ENCODE measurements at regions of chr2 and their contacts with region 1.

Region 1: GRCh38 chr2:118003396-118003824 is 10.5 kb downstream of the CCDC93 start:
- DNase-seq: peak; percentile 90
- H3K4me3 Mint-ChIP-seq: no peak overlapping the region
- H3K27ac Mint-ChIP-seq: peak overlapping the region; percentile 73
- H3K4me1 Mint-ChIP-seq: peaks cover 17% of the 10 kb centered on the region
- H3K27me3 Mint-ChIP-seq: no peaks in the 10 kb centered on the region

Region 2: GRCh38 chr2:117814417-117815264 is 188.8 kb before region 1 on chr2 and contains the start of gene DDX18:
- intact Hi-C with region 1: loop called (anchors 1 kb)
- DNase-seq: peak; percentile 99
- H3K4me3 Mint-ChIP-seq: peak within 1 kb of the TSS; percentile 97
- H3K27ac Mint-ChIP-seq: peak within 1 kb of the TSS; percentile 95
- H3K4me1 Mint-ChIP-seq: peaks cover 30% of the 10 kb centered on the region
- H3K27me3 Mint-ChIP-seq: no peaks in the 10 kb centered on the region
- total RNA-seq, gene DDX18: 150 and 157 TPM in 2 replicates

Region 3: DNA sequence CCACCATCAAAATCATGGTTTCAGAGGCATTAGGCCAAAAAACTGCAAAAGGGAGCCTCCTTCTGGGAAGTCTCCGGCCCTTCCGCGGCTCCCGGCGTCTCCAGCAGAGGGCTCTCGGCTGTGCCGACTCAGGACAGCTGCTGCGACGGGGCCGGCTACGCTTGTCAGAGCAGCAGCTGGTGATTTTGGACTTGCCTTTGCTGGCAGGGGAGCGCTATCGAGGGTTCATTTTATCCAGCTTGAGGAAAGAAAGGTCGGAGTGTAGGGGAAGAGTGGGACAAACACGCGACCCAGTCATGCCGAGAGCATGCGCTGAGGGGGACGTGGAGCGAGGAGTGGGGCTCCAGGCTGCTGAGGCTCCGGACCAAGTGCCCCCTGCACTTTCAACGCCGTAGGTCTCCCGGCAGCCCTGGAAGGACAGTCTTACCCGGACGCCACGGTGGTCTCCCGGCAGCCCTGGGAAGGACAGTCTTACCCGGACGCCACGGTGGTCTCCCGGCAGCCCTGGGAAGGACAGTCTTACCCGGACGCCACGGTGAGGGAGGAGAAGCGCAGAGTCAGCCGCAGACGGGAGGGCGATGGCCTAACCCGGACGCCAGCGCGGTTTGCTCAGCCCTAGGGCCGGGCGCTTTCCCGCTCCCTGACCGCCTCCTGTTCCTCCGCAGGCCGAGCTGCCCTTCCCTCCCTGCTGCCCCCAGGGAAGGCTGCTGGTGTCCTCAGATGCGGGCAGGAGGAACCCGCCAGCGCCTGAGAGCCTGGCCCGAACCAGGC is 167.2 kb before region 1 on chr2:
- intact Hi-C with region 1: loop called (anchors 1 kb)
- DNase-seq: peak; percentile 82
- H3K4me3 Mint-ChIP-seq: peak overlapping the region; percentile 58
- H3K27ac Mint-ChIP-seq: peak overlapping the region; percentile 31
- H3K4me1 Mint-ChIP-seq: peaks cover 3% of the 10 kb centered on the region
- H3K27me3 Mint-ChIP-seq: no peaks in the 10 kb centered on the region

Region 4: GRCh38 chr2:118013724-118014491 is 10.5 kb after region 1 on chr2 and contains the start of gene CCDC93:
- intact Hi-C with region 1: loop called (anchors 1 kb)
- DNase-seq: peak; percentile 97
- H3K4me3 Mint-ChIP-seq: peak within 1 kb of the TSS; percentile 96
- H3K27ac Mint-ChIP-seq: peak within 1 kb of the TSS; percentile 91
- H3K4me1 Mint-ChIP-seq: peaks cover 41% of the 10 kb centered on the region
- H3K27me3 Mint-ChIP-seq: no peaks in the 10 kb centered on the region
- total RNA-seq, gene CCDC93: 30.3 and 34.4 TPM in 2 replicates

Region 5: GRCh38 chr2:118032169-118033013 is 29.0 kb after region 1 on chr2:
- intact Hi-C with region 1: no loop called
- DNase-seq: peak; percentile 79
- H3K4me3 Mint-ChIP-seq: no peak overlapping the region
- H3K27ac Mint-ChIP-seq: no peak overlapping the region
- H3K4me1 Mint-ChIP-seq: peaks cover 2% of the 10 kb centered on the region
- H3K27me3 Mint-ChIP-seq: peaks cover 51% of the 10 kb centered on the region

Region 6: GRCh38 chr2:118122594-118123281 is 119.3 kb after region 1 on chr2:
- intact Hi-C with region 1: no loop called
- DNase-seq: no peak
- H3K4me3 Mint-ChIP-seq: no peak overlapping the region
- H3K27ac Mint-ChIP-seq: no peak overlapping the region
- H3K4me1 Mint-ChIP-seq: peaks cover 2% of the 10 kb centered on the region
- H3K27me3 Mint-ChIP-seq: peaks cover 2% of the 10 kb centered on the region